Spleen (tissue), 13 donors: ENCODE measurements at regions of chr20 and their contacts with region 1.

Region 1: GRCh38 chr20:51595058-51595532 is 52.6 kb upstream of the NFATC2 start:
- DNase-seq: peak; percentile 96
- H3K4me3 ChIP-seq: peak overlapping the region in 1 of 8 donors; percentile 21
- H3K27ac ChIP-seq: peak overlapping the region in 3 of 8 donors; percentile 6 to 37 (median 12)
- H3K4me1 ChIP-seq: peaks cover 6 to 25% (median 15%) of the 10 kb centered on the region in 6 donors
- H3K27me3 ChIP-seq: peaks cover 0 to 5% (median 0%) of the 10 kb centered on the region in 7 donors
- CTCF ChIP-seq: peak; percentile 74 to 96 (median 89)
- POLR2A ChIP-seq: no peak

Region 2: DNA sequence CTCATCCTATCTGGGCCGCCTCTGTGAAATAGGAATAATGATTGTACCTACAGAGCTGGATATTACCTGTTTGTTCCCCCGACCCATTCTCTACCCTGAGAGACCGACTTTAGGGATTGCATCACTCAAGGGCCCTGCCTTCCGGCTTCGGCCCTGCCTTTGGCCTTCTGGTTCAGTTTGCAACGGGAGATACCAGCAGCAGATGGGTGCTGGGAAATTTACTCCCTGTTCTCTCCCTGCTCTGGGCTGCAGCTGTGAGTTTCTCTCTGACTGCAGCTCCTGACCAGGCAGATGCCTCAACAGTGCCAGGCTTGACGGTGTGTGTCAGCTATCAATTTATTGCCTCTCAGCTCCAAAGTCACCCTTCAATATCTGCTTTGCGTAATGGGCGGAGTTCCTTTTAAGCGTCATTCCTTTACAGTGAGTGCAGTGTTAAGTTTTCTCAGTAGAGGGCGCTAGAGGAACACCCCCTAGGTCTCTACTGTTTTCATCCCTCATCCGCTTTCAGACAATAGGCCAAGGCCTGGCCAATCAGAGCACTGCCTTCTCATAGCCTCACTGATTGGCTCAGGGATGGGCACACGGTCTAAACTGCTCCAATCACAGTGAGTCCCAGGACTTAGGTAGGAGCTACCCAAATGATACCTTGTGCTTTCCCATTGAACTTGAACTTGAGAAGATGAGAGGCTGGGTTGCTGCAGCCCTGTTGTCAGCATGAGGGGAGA is 602.2 kb before region 1 on chr20:
- intact Hi-C with region 1: loop called (anchors 10 kb)
- DNase-seq: no peak
- H3K4me3 ChIP-seq: no peak overlapping the region
- H3K27ac ChIP-seq: no peak overlapping the region
- H3K4me1 ChIP-seq: peaks cover 0 to 20% (median 0%) of the 10 kb centered on the region in 6 donors
- H3K27me3 ChIP-seq: peaks cover 0 to 17% (median 0%) of the 10 kb centered on the region in 7 donors
- CTCF ChIP-seq: peak in 8 of 11 experiments; percentile 8 to 56 (median 30)
- POLR2A ChIP-seq: no peak

Region 3: GRCh38 chr20:51372176-51372803 is 222.8 kb before region 1 on chr20:
- intact Hi-C with region 1: loop called (anchors 2 kb)
- DNase-seq: peak; percentile 84
- H3K4me3 ChIP-seq: no peak overlapping the region
- H3K27ac ChIP-seq: no peak overlapping the region
- H3K4me1 ChIP-seq: peaks cover 0 to 27% (median 10%) of the 10 kb centered on the region in 6 donors
- H3K27me3 ChIP-seq: no peaks in the 10 kb centered on the region
- CTCF ChIP-seq: peak; percentile 43 to 85 (median 80)
- POLR2A ChIP-seq: no peak

Region 4: DNA sequence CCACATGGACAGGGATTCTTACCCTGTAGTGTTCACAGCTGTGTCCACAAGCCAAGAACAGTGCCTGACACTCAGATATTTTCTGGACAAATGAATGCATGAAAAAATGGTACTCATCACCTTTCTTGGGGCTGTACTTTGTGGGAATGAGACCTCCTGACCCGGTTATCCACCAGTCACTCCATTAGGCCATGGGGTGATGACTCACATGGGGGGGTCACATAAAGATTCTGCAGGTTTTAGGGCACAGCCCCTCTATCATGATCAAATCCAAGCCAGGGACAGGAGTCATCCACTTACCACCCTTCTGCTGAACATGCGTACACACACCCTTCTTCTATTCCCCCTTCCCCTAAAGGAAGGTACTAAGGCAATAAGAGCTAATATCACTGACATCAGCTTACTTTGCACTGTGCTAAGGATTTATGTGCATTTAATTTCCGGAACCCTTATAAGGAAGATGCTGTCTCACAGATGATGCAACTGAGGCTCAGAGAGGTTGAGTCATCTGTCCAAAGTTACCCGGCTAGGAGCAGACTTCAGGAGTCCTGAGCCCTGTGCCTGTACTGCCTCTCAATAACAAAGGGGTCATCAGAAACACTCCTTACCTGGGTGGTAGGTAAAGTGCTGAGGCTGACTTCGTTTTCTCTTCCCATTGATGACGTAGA is 160.4 kb before region 1 on chr20:
- intact Hi-C with region 1: no loop called
- DNase-seq: no peak
- H3K4me3 ChIP-seq: no peak overlapping the region
- H3K27ac ChIP-seq: no peak overlapping the region
- H3K4me1 ChIP-seq: peaks cover 0 to 54% (median 24%) of the 10 kb centered on the region in 6 donors
- H3K27me3 ChIP-seq: no peaks in the 10 kb centered on the region
- CTCF ChIP-seq: no peak
- POLR2A ChIP-seq: no peak

Region 5: DNA sequence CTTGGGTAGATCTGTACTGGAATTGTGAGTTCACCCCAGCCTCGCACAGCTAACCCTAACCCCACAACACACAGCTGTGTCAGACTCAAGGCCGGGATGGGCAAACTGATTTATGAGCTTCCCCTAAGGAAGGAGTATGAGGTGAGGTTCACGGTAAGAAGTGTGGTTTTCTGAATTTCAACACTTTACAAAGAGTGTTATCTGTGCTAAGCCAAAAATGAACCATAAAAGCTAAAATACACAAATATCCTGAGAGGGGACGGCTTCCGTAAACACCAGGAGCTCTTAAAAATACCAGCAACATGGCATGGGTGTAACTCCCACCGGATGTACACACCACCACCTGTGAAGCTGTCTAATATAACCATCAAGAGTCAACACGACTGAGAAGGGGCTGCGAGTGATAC is 71.9 kb after region 1 on chr20:
- intact Hi-C with region 1: no loop called
- DNase-seq: peak; percentile 4
- H3K4me3 ChIP-seq: no peak overlapping the region
- H3K27ac ChIP-seq: no peak overlapping the region
- H3K4me1 ChIP-seq: peaks cover 0 to 26% (median 1%) of the 10 kb centered on the region in 6 donors
- H3K27me3 ChIP-seq: no peaks in the 10 kb centered on the region
- CTCF ChIP-seq: no peak
- POLR2A ChIP-seq: no peak